ENCODE measurements at regions of chr4 and their contacts with region 1.

Region 1: DNA sequence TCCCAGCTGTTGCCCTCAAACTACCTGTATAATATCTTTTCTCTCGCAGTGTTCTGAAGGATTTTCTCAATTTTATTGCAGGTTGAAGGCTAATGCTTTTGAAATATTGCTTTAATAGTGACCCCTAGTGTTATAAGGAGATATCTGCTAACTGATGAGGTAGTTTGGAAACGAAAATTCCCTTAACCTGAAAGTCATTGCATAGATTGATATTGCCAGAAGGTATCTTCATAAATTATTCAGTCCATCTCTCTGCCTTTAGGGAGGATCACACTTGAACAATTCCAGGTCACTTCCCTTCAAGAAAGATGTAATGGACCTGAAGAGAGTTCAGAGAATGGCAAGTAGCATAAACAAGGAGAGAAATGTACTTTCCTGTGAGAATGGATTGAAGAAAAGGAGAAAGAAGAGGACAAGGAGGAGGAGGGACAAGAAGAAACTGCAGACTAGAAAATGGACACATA is 44.1 kb downstream of the TIGD4 start:
- DNase-seq: no peak
- H3K4me3 ChIP-seq: no peak overlapping the region
- H3K27ac ChIP-seq: no peak overlapping the region
- H3K4me1 ChIP-seq: no peaks in the 10 kb centered on the region
- H3K27me3 ChIP-seq: no peaks in the 10 kb centered on the region
- CTCF ChIP-seq: peak; percentile 54

Region 2: DNA sequence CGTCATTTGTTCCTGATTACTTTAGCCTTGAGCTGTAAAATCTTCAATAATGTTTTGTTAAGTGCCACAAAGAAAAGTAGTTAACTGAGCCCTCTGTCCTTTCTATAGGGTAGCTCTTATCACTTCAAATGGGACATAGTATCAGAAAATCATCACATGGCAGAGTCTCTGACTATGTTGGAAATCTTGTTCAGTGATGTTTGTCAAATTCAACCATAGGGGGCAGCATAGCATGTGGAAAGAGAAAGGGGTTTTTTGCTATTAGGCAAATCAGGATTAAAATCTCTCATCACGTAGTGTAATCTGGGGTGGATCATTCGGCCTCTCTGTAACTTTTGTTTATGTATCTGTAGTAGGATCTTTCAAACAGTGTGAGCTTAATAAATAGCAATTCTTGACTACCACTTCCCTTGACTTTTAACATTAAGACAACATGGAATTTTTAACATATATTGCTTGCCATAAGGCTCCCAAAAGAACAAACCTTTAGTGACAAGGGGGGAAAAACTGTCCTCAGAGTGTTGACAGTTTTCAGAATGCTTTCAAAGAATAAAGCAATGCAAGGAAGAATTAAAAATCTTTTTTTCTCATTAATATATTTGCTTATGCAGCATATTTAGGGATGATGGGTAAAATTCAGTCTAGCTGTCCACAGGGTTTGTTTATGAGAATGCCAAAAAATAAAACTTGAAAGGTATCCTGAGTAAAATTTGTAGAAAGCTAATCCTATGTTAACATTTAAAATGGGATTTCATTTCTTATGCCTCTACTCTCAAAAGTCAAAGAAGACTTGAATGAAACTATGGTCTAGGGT is 326.7 kb before region 1 on chr4:
- intact Hi-C with region 1: loop called (anchors 5 kb)
- DNase-seq: peak; percentile 34
- H3K4me3 ChIP-seq: no peak overlapping the region
- H3K27ac ChIP-seq: no peak overlapping the region
- H3K4me1 ChIP-seq: no peaks in the 10 kb centered on the region
- H3K27me3 ChIP-seq: no peaks in the 10 kb centered on the region
- CTCF ChIP-seq: peak; percentile 60

Region 3: GRCh38 chr4:152500800-152501434 is 234.5 kb before region 1 on chr4:
- intact Hi-C with region 1: loop called (anchors 5 kb)
- DNase-seq: peak; percentile 81
- H3K4me3 ChIP-seq: no peak overlapping the region
- H3K27ac ChIP-seq: no peak overlapping the region
- H3K4me1 ChIP-seq: no peaks in the 10 kb centered on the region
- H3K27me3 ChIP-seq: no peaks in the 10 kb centered on the region
- CTCF ChIP-seq: peak; percentile 77

Region 4: DNA sequence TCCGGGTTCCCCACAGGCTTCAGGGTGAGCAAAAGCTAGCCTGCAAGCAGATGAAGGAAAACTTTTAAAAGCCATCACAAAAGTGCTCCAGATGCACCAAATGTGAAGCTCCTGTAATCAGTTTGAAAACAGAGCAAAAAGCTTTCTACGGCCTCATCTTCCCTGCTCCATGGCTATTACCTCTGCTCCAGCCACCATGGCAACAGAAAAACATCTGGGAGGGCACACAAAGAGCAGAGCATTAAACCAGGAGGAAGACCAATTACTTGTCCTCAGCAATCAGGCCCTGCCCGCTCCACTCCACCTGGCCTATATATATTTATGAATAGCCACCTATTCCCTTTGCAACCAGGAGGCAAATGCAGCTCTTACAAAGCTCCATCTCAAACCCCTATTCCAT is 89.2 kb before region 1 on chr4:
- intact Hi-C with region 1: loop called (anchors 5 kb)
- DNase-seq: no peak
- H3K4me3 ChIP-seq: no peak overlapping the region
- H3K27ac ChIP-seq: no peak overlapping the region
- H3K4me1 ChIP-seq: no peaks in the 10 kb centered on the region
- H3K27me3 ChIP-seq: no peaks in the 10 kb centered on the region
- CTCF ChIP-seq: no peak

Measured in colonic mucosa (tissue), 4 donors.